ENCODE measurements at regions of chr19 and their contacts with region 1.

Region 1: DNA sequence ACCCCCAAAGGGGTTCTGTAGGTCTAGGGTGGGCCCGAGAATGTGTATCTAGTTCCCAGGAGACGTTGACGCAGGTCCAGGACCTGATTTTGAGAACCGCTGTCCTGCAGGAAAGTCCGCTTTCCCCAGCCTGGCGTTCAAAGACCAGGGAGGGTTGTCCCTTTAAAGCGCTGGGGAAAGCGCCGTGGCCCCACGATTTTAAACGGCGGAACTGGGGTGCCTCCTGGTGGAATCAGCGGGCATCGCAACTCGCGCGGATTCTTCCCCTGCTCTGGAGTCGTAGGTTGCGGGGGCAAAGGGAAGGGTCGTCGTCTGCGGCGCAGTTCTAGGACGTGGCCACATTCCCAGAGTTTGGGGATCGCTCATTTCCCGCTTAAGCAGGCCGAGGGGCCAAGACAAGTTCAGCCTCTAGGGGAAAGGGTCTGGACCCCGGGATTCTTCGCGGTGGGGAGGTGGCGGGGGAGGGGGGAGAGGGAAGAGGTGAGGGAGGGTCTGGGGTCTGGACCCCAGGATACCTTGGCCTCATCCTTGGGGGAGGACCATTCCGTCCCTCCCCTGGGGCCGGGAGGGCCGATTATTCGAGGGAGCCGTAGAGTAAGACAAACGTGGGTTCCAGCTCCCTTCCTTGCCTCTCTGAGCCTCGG is 7.7 kb downstream of the PNMA8B start:
- DNase-seq: peak; percentile 58 to 86 (median 73)
- ATAC-seq: peak; percentile 87
- H3K4me3 ChIP-seq: no peak overlapping the region
- H3K4me3 Mint-ChIP-seq: no peak overlapping the region
- H3K27ac ChIP-seq: no peak overlapping the region
- H3K27ac Mint-ChIP-seq: no peak overlapping the region
- H3K4me1 ChIP-seq: peaks cover 33% of the 10 kb centered on the region
- H3K4me1 Mint-ChIP-seq: peaks cover 22% of the 10 kb centered on the region
- H3K27me3 ChIP-seq: peaks cover 42 to 46% of the 10 kb centered on the region in 2 experiments
- H3K27me3 Mint-ChIP-seq: peaks cover 58% of the 10 kb centered on the region
- CTCF ChIP-seq: peak; percentile 76

Region 2: GRCh38 chr19:46283771-46284170 is 204.2 kb before region 1 on chr19:
- CTCF ChIA-PET with region 1: interaction called, 24 read pairs
- POLR2A ChIA-PET with region 1: no interaction called
- intact Hi-C with region 1: loop called in 1 of 2 experiments (anchors 1 kb)
- DNase-seq: no peak
- ATAC-seq: no peak
- H3K4me3 ChIP-seq: no peak overlapping the region
- H3K4me3 Mint-ChIP-seq: no peak overlapping the region
- H3K27ac ChIP-seq: no peak overlapping the region
- H3K27ac Mint-ChIP-seq: no peak overlapping the region
- H3K4me1 ChIP-seq: no peaks in the 10 kb centered on the region
- H3K4me1 Mint-ChIP-seq: no peaks in the 10 kb centered on the region
- H3K27me3 ChIP-seq: no peaks in the 10 kb centered on the region
- H3K27me3 Mint-ChIP-seq: peaks cover 9% of the 10 kb centered on the region
- CTCF ChIP-seq: no peak

Region 3: DNA sequence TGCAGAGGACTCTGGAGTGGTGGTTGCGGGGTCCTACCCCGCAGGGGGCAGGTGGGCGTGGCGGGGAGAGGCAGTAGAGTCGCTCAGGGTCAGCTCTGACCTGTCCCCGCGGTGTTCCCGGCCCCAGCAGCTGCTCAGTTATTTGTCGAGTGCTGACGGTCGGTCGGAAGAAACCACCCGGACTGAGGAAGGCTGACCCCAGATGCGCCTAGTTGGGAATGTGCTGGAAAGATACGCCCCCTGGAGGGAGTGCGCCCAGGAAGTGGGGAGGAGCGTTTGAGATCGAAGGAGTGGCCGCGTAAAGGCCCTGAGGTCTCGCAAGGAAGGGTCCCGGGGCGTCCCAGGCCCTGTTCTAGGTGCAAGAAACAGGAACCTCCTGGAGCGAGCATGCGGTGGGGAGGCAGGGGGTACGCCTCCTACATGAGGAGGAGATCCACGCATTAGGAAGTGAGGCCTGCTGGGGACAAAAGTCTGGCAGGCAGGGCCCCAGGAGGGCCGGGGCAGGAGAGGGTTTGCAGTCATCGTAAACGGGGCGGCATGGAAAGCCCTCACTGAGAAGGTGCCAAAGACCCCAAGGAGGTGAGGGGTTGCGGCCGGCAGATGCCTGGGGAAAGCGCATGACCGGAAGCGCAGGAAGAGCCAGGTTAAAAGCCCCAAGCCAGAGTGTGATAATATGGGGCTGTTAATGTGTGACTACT is 83.7 kb before region 1 on chr19:
- CTCF ChIA-PET with region 1: interaction called, 18 read pairs
- POLR2A ChIA-PET with region 1: no interaction called
- intact Hi-C with region 1: loop called (anchors 1 kb)
- DNase-seq: no peak
- ATAC-seq: no peak
- H3K4me3 ChIP-seq: peak overlapping the region; percentile 21 to 37
- H3K4me3 Mint-ChIP-seq: peak overlapping the region; percentile 70
- H3K27ac ChIP-seq: no peak overlapping the region
- H3K27ac Mint-ChIP-seq: no peak overlapping the region
- H3K4me1 ChIP-seq: peaks cover 16% of the 10 kb centered on the region
- H3K4me1 Mint-ChIP-seq: peaks cover 21% of the 10 kb centered on the region
- H3K27me3 ChIP-seq: peaks cover 36% of the 10 kb centered on the region in 2 experiments
- H3K27me3 Mint-ChIP-seq: peaks cover 64% of the 10 kb centered on the region
- CTCF ChIP-seq: no peak

Measured in CD8-positive, alpha-beta T cell (primary cell).